Activated naive CD4-positive, alpha-beta T cell treated with anti-CD3 and anti-CD28 coated beads for 36 hours (primary cell): ENCODE measurements at regions of chr11 and their contacts with region 1.

Region 1: DNA sequence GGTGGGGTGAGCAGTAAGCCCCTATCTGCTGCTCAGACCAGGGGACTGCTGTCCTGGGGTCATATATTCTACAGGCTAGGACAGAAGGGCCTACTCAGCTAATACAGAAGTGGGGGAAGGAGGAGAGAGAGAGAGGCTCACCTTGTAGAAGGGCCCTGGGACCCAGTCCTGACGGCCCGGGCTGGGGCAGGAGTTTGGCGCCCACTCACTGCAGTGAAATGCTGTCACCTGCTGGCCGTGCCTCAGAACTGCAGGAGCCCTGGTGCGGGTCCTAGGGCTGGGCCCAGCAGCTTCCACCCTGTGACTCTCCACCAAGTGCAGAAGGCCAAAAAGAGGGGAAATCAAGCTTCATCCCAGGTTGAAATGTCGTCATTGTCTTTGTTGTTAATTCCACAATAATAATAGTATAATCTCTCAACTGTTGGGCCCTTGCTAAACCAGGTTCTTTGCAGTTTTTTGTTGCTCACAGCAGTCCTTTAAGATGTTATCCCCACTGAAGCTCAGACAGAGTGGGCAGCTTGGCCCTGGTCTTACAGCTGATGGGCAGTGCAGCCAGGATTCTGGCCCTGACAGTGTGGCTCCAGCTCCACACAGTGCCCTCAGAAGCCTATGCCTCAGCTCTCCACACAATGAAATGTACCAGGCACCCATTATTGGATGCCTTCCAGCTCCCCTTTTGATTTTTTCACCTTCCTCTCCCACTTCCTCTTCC is 29.6 kb downstream of the TRIM29 start:
- DNase-seq: peak; percentile 74
- H3K4me3 Mint-ChIP-seq: no peak overlapping the region
- H3K27ac Mint-ChIP-seq: no peak overlapping the region
- H3K4me1 Mint-ChIP-seq: no peaks in the 10 kb centered on the region
- H3K27me3 Mint-ChIP-seq: peaks cover 9% of the 10 kb centered on the region

Region 2: GRCh38 chr11:118918128-118918685 is 1190.1 kb before region 1 on chr11:
- CTCF ChIA-PET with region 1: no interaction called
- intact Hi-C with region 1: no loop called
- DNase-seq: peak; percentile 69
- H3K4me3 Mint-ChIP-seq: peak overlapping the region; percentile 87
- H3K27ac Mint-ChIP-seq: peak overlapping the region; percentile 99
- H3K4me1 Mint-ChIP-seq: peaks cover 80% of the 10 kb centered on the region
- H3K27me3 Mint-ChIP-seq: no peaks in the 10 kb centered on the region

Region 3: GRCh38 chr11:119641983-119642745 is 466.1 kb before region 1 on chr11:
- CTCF ChIA-PET with region 1: interaction called, 4 read pairs
- intact Hi-C with region 1: loop called (anchors 1 kb)
- DNase-seq: peak; percentile 22
- H3K4me3 Mint-ChIP-seq: no peak overlapping the region
- H3K27ac Mint-ChIP-seq: no peak overlapping the region
- H3K4me1 Mint-ChIP-seq: no peaks in the 10 kb centered on the region
- H3K27me3 Mint-ChIP-seq: no peaks in the 10 kb centered on the region